Heart right ventricle (tissue), 16 donors: ENCODE measurements at regions of chr7 and their contacts with region 1.

Region 1: DNA sequence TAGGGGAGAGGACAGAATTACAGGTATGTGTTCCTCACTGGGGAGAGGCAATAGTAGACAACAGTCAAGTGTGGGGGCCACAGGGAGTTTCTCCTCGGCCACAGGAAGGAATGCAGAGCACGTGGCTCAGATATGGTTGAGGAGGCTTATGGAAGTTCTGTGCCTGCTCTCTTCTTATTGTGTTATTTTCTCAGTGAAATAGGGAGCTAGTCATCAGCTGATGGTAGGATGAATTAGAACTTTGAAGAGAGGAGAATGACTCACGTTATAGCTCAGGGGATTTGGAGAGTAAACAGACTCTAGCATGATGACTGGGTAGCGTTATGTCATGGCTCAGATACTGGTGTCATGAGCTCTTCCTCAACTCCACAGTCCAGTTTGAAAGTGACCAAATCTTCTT is 308.3 kb upstream of the IGFBP3 start:
- DNase-seq: no peak
- ATAC-seq: peak in 1 of 8 donors; percentile 69
- H3K4me3 ChIP-seq: no peak overlapping the region
- H3K27ac ChIP-seq: no peak overlapping the region
- H3K4me1 ChIP-seq: no peaks in the 10 kb centered on the region
- H3K27me3 ChIP-seq: no peaks in the 10 kb centered on the region
- CTCF ChIP-seq: no peak

Region 2: DNA sequence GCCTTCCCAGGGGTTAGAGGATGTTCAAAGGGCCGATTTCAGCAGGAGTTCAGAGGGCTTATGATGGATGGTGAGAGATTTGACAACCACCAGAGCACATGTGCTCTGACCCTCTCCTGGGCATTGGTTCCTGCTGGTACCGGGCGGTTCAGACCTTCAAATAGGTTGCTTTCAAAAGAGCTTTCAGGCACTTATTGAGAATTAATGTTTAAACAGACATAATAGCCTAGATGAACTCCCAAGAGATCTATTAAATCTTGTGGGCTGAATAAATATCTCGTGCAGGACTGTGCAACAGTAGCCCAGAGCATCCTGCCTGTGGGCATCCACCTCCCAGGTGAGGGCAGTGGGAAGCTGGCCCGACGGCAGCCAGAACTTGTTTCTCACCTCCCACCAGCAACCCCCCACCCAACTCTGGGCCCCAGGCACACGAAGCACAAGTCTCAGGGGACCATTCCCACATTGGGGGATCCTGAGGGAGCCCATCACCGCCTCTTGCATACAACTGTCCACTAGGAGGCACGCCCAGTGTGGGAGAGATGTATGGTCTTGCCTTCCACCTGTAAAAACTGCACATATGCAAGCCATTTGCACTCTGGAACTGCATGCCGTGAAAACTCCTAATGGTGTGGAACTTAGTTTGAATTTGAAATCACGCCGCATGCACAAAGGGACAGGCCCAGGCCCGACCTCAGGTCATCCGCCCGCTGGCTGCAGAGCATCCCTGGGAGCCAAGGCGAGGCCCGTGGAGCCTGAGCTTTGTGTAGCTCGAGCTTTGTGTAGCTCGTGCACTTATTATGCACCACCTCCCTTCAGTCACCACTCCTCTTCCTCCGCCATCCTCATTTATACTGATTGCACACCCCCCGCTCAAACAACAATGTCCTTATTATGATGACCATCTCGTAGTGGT is 507.5 kb before region 1 on chr7:
- intact Hi-C with region 1: no loop called
- DNase-seq: no peak
- ATAC-seq: no peak
- H3K4me3 ChIP-seq: no peak overlapping the region
- H3K27ac ChIP-seq: no peak overlapping the region
- H3K4me1 ChIP-seq: peaks cover 0 to 11% (median 3%) of the 10 kb centered on the region in 9 donors
- H3K27me3 ChIP-seq: no peaks in the 10 kb centered on the region
- CTCF ChIP-seq: no peak

Region 3: DNA sequence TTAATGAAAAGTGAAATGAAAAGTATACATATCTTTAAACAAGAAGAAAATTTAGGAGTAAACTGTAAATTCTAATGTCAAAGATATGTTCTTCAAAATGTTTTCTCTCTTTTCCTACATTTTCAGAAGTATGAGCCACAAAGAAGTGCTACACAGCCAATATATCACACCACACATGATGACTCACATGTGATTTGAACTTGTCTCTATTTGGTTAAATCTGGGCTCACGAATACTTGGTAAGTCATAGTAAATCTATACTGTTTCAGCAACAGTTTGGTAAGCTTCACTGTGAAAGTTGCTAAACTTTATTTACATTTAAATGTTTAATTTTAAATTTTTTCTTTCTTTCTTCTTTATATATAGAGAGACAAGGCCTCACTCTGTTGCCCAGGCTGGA is 72.3 kb after region 1 on chr7:
- intact Hi-C with region 1: loop called in 1 of 10 experiments (anchors 2 kb)
- DNase-seq: no peak
- ATAC-seq: no peak
- H3K4me3 ChIP-seq: no peak overlapping the region
- H3K27ac ChIP-seq: no peak overlapping the region
- H3K4me1 ChIP-seq: no peaks in the 10 kb centered on the region
- H3K27me3 ChIP-seq: no peaks in the 10 kb centered on the region
- CTCF ChIP-seq: no peak

Region 4: GRCh38 chr7:46810986-46811385 is 581.6 kb after region 1 on chr7:
- intact Hi-C with region 1: no loop called
- DNase-seq: no peak
- ATAC-seq: peak in 4 of 8 donors; percentile 6 to 24 (median 10)
- H3K4me3 ChIP-seq: no peak overlapping the region
- H3K27ac ChIP-seq: peak overlapping the region in 6 of 10 donors; percentile 32 to 67 (median 50)
- H3K4me1 ChIP-seq: peaks cover 0 to 41% (median 13%) of the 10 kb centered on the region in 9 donors
- H3K27me3 ChIP-seq: no peaks in the 10 kb centered on the region
- CTCF ChIP-seq: no peak